ENCODE measurements at regions of chrX and their contacts with region 1.

Region 1: DNA sequence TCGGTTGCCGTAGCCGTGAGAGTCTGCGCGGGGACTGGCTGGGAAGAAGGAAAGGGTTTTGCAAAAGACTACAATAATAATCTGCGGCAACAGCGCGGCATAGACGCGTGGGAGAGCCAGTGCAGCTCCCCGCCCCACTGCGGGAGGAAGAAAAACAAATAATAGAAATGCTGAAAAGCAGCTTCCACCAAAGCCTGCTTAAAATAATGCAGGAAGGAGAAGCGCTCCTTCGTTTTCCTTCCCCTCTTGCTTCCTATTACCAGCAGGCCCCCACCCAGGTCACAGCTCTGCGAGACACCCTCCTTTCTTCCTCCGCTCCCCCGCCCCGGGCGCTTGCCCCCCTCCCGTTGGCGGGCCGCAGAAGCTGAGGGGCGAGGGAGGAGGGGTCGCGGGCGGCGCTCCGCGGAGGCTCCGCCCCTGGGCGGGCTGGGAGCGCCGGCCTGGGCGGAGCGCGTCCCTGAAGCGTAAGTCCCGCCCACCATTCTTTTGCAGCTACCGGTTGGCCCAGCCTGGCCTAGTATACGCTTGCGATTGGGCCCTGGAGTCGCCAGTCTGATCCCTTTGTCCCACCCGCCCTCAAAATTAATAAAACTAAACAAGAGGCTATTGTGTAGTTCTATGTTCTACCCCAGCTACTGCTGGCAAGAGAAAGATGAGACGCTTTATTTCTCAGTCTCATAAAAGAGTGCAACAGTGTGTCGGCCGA is 636 bp upstream of the AMOT start:
- DNase-seq: peak; percentile 85 to 91
- H3K4me3 ChIP-seq: peak overlapping the region; percentile 85
- H3K27ac ChIP-seq: peak overlapping the region; percentile 48; the same call in 1 of the 2 replicates
- H3K4me1 ChIP-seq: peaks cover 34% of the 10 kb centered on the region
- H3K27me3 ChIP-seq: no peaks in the 10 kb centered on the region
- CTCF ChIP-seq: no peak

Region 2: GRCh38 chrX:111914398-111915090 is 926.7 kb before region 1 on chrX:
- CTCF ChIA-PET with region 1: no interaction called
- POLR2A ChIA-PET with region 1: interaction called, 21 read pairs
- intact Hi-C with region 1: no loop called
- DNase-seq: peak; percentile 12 to 95
- H3K4me3 ChIP-seq: no peak overlapping the region
- H3K27ac ChIP-seq: peak overlapping the region; percentile 95
- H3K4me1 ChIP-seq: peaks cover 21% of the 10 kb centered on the region
- H3K27me3 ChIP-seq: no peaks in the 10 kb centered on the region
- CTCF ChIP-seq: no peak

Region 3: DNA sequence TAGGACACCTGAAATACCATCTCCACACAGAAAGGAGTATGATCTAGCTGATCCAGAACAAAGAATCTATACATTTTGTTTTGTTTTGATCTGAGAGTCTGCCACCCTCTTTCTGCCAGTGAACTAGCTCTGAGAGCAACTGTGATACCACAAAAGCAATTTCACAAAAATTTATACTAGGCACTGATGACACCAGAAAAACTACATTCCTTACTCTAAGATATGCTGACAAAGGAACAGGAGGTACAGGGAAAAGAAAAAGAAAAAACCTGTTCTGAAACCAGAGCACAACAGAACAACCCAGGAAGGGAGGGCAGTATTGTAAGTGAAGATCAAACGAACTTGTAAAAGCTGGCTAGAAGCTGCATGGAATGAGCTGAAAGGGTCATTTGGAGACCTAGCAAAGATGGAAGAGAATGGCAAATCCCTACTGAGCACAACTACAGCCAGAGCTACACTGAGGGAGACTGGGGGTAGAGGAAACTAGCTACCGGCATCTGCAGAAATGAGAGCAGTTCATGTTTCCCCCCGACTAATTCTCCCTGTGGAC is 32.5 kb before region 1 on chrX:
- CTCF ChIA-PET with region 1: no interaction called
- POLR2A ChIA-PET with region 1: no interaction called
- intact Hi-C with region 1: loop called (anchors 5 kb)
- DNase-seq: peak in 1 of 2 experiments; percentile 51
- H3K4me3 ChIP-seq: no peak overlapping the region
- H3K27ac ChIP-seq: peak overlapping the region; percentile 14; the same call in 1 of the 2 replicates
- H3K4me1 ChIP-seq: 0 out of 2 replicates have a peak, but pooled peaks cover 13% of the 10 kb centered on the region
- H3K27me3 ChIP-seq: no peaks in the 10 kb centered on the region
- CTCF ChIP-seq: no peak

Region 4: DNA sequence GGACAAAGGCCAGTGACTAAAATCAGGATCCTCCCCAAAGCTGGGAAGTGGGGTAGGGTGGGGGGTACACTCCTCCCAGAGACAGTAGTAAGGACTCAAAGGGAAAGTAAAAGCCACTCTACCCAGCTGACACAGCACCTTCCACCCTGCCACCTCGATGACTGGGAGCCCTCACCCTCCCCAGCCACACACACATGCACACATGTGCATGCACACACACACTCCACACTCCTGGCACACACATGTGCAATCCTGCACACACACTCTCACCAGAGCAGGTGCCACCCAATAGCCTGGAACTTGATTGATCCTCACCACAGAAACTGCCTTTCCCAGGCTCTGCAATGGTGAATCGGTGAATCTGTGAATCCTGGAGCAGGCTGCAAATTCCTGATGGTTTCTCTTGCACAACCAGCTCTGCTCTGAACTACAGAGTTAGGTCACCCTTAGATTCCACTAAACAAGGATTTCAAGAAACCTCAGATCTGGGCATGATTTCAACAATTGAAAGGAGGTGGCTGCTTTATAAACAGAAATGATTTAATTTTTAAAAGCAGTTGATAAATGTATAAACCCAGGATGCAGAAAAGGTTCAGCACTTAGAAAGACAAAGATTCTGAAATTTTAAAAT is 22.1 kb before region 1 on chrX:
- CTCF ChIA-PET with region 1: interaction called, 3 read pairs
- POLR2A ChIA-PET with region 1: no interaction called
- intact Hi-C with region 1: loop called (anchors 1 kb)
- DNase-seq: peak; percentile 49 to 84
- H3K4me3 ChIP-seq: peak overlapping the region; percentile 35; the same call in 1 of the 2 replicates
- H3K27ac ChIP-seq: peak overlapping the region; percentile 86
- H3K4me1 ChIP-seq: peaks cover 43% of the 10 kb centered on the region
- H3K27me3 ChIP-seq: no peaks in the 10 kb centered on the region
- CTCF ChIP-seq: no peak

Region 5: DNA sequence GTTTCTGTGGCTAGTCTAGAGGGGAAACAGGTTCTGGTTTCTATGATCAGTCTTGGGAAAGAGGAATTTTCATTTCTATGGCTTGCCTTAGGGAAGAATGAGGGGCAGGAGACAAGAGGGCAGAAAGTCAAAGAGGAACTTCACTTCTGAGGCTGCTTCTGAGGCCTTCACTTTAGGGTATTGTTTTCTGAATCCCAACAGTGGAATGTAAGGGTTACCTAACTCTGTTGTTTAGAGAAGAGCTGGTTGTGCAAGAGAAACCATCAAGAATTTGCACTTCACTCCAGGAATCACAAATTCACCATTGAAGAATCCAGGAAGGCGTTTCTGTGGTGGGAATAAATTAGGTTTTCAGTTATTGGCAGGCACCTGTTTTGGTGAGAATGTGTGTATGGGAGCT is 126.1 kb after region 1 on chrX:
- CTCF ChIA-PET with region 1: no interaction called
- POLR2A ChIA-PET with region 1: no interaction called
- intact Hi-C with region 1: loop called (anchors 2 kb)
- DNase-seq: peak; percentile 47 to 98
- H3K4me3 ChIP-seq: peak overlapping the region; percentile 38; the same call in 1 of the 2 replicates
- H3K27ac ChIP-seq: peak overlapping the region; percentile 99
- H3K4me1 ChIP-seq: peaks cover 54% of the 10 kb centered on the region
- H3K27me3 ChIP-seq: no peaks in the 10 kb centered on the region
- CTCF ChIP-seq: no peak

Measured in PC-9 (cell line).